ENCODE measurements at regions of chr3 and their contacts with region 1.

Region 1: DNA sequence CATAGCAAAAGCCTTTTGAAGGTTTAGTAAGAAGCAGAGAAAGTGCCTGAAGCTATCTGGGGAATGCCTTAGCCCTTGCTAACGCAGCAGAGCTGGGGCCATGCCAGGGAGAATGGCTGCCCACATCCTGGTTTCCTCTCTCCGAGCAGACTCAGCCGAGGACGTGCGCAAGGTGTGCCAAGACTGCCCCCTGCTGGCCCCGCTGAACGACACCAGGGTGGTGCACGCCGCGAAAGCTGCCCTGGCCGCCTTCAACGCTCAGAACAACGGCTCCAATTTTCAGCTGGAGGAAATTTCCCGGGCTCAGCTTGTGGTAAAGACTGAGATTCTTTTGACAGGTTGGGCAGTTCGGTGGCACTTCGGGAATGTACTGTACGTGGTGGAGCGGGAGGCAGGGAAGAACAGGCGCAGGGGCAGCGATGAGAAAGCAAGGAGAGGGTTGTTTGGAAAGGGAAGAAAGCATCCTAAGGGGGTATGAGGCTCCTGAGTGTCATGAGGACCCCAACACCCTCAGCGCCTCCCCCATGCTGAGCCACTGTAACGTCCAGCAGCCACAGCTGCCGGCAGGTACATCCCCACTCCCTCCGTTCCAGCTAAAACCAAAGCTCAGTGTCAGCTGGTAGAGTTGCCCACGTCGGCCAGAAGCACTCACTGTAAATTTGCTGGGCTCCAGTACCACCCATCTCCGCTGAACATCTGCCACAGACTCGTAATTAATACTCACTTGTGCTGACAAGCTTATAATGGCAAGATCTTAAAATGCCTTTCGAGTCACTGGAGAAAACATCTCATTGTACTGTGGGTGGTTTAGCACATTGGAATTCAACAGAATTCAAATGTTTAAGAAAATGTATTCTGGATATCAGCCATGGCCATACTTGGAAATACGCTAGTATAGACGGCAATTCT is 4.4 kb downstream of the AHSG start:
- DNase-seq: peak; percentile 86 to 87
- ATAC-seq: peak; percentile 97 to 99
- H3K4me3 ChIP-seq: peak overlapping the region; percentile 35
- H3K27ac ChIP-seq: peak overlapping the region; percentile 65 to 75; a peak in 5 of 6 replicates
- H3K4me1 ChIP-seq: peaks cover 8% of the 10 kb centered on the region
- CTCF ChIP-seq: peak; percentile 72
- EP300 ChIP-seq: no peak
- POLR2A ChIP-seq: no peak
- RAD21 ChIP-seq: peak; percentile 74 to 84

Region 2: GRCh38 chr3:186540221-186540834 is 77.0 kb before region 1 on chr3:
- CTCF ChIA-PET with region 1: interaction called, 20 read pairs
- POLR2A ChIA-PET with region 1: no interaction called
- DNase-seq: peak; percentile 52 to 59
- ATAC-seq: peak; percentile 70 to 90; a peak in 5 of 6 replicates
- H3K4me3 ChIP-seq: no peak overlapping the region
- H3K27ac ChIP-seq: no peak overlapping the region
- H3K4me1 ChIP-seq: no peaks in the 10 kb centered on the region
- CTCF ChIP-seq: peak; percentile 79
- EP300 ChIP-seq: no peak
- POLR2A ChIP-seq: no peak
- RAD21 ChIP-seq: peak; percentile 82 to 84

Region 3: DNA sequence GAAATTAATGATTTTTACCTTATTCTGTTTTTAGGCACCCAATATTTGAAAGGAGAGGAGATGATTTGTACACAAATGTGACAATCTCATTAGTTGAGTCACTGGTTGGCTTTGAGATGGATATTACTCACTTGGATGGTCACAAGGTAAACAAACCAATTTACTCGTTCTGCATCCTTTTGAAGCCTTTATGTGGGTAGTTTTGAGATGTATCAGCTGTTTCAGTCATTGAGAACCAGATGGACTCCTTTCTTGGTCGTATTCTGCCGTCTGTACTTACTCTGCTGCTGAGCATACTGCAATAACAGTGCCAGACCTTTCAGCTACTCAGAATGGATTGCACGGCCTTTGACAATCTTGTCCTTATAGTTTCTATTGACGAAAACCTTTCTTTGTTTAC is 33.5 kb before region 1 on chr3:
- CTCF ChIA-PET with region 1: interaction called, 62 read pairs
- POLR2A ChIA-PET with region 1: no interaction called
- DNase-seq: no peak
- ATAC-seq: no peak
- H3K4me3 ChIP-seq: no peak overlapping the region
- H3K27ac ChIP-seq: no peak overlapping the region
- H3K4me1 ChIP-seq: peaks cover 6% of the 10 kb centered on the region
- CTCF ChIP-seq: no peak
- EP300 ChIP-seq: no peak
- POLR2A ChIP-seq: no peak
- RAD21 ChIP-seq: no peak

Region 4: DNA sequence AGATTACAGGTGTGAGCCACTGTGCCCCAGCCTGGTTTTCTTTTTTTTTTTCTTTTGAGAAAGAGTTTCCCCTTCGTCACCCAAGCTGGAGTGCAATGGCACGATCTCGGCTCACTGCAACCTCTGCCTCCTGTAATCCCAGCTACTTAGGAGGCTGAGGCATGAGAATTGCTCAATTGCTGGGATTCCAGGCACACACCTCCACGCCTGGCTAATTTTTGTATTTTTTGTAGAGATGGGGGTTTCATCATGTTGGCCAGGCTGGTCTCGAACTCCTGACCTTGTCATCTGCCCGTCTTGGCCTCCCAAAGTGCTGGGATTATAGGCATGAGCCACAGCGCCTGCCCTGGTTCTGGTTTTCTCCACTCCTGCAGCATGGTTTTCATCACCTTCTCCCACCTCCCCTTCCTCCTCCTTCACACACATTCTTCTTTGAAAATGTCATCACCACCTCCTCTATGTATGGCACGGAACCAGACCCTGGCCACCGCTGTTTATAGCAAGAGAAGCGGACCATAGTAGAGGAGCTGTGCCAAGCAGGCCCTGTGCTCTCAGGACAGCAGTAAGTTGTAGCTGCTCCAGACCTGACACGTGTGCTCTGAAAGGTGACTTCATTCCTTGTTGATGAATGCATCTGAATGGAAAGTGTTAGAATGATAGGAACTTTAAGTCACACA is 19.0 kb before region 1 on chr3:
- CTCF ChIA-PET with region 1: interaction called, 62 read pairs
- POLR2A ChIA-PET with region 1: no interaction called
- DNase-seq: no peak
- ATAC-seq: no peak
- H3K4me3 ChIP-seq: no peak overlapping the region
- H3K27ac ChIP-seq: peak overlapping the region in 1 of 2 experiments; percentile 70; a peak in 3 of 6 replicates
- H3K4me1 ChIP-seq: peaks cover 17% of the 10 kb centered on the region; the same call in 2 of the 3 replicates
- CTCF ChIP-seq: no peak
- EP300 ChIP-seq: no peak
- POLR2A ChIP-seq: no peak
- RAD21 ChIP-seq: no peak

Region 5: DNA sequence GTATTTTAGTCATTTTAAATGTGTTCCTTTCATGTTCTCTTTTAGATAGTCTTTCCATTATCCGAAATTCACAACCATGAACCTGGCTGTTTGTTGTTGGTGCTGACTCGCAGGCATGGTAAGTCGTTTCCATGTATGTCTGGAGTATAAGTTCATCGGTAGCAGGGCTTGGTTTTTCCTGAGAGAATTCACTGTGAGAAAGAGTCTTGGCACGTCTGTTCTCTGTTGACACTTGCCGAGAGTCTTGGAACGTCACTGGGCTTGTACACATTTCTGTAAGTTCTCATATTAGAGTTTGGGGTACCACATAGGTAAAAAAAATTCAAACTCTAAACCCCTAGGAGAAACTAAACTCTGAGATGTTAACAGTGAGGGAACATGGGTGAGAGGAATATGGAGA is 136.7 kb after region 1 on chr3:
- CTCF ChIA-PET with region 1: interaction called, 10 read pairs
- POLR2A ChIA-PET with region 1: no interaction called
- DNase-seq: no peak
- ATAC-seq: no peak
- H3K4me3 ChIP-seq: no peak overlapping the region
- H3K27ac ChIP-seq: peak overlapping the region; percentile 73 to 77; a peak in 3 of 6 replicates
- H3K4me1 ChIP-seq: peaks cover 14% of the 10 kb centered on the region; the same call in 2 of the 3 replicates
- CTCF ChIP-seq: no peak
- EP300 ChIP-seq: no peak
- POLR2A ChIP-seq: no peak
- RAD21 ChIP-seq: no peak

Region 6: GRCh38 chr3:186821429-186822367 is 204.4 kb after region 1 on chr3:
- CTCF ChIA-PET with region 1: interaction called, 34 read pairs
- POLR2A ChIA-PET with region 1: no interaction called
- DNase-seq: peak in 1 of 2 experiments; percentile 56
- ATAC-seq: peak in 1 of 2 experiments; percentile 59; a peak in 3 of 6 replicates
- H3K4me3 ChIP-seq: no peak overlapping the region
- H3K27ac ChIP-seq: no peak overlapping the region
- H3K4me1 ChIP-seq: peaks cover 10% of the 10 kb centered on the region; the same call in 1 of the 3 replicates
- CTCF ChIP-seq: peak; percentile 64
- EP300 ChIP-seq: no peak
- POLR2A ChIP-seq: no peak
- RAD21 ChIP-seq: peak; percentile 70 to 75

Measured in A549 (cell line).